ENCODE measurements at regions of chr6 and their contacts with region 1.

Region 1: GRCh38 chr6:131488780-131489179 is 84.2 kb upstream of the ARG1 start:
- DNase-seq: no peak
- H3K4me3 ChIP-seq: no peak overlapping the region
- H3K27ac ChIP-seq: no peak overlapping the region
- H3K4me1 ChIP-seq: peaks cover 0 to 3% (median 0%) of the 10 kb centered on the region in 4 experiments; a peak in 1 of 7 replicates
- H3K27me3 ChIP-seq: no peaks in the 10 kb centered on the region
- CTCF ChIP-seq: no peak
- EP300 ChIP-seq: no peak
- POLR2A ChIP-seq: no peak
- RAD21 ChIP-seq: no peak

Region 2: GRCh38 chr6:131387562-131388447 is 101.0 kb before region 1 on chr6:
- CTCF ChIA-PET with region 1: no interaction called
- POLR2A ChIA-PET with region 1: no interaction called
- DNase-seq: no peak
- H3K4me3 ChIP-seq: no peak overlapping the region
- H3K27ac ChIP-seq: no peak overlapping the region
- H3K4me1 ChIP-seq: peaks cover 0 to 3% (median 0%) of the 10 kb centered on the region in 4 experiments; a peak in 2 of 7 replicates
- H3K27me3 ChIP-seq: no peaks in the 10 kb centered on the region; a peak in 2 of 7 replicates
- CTCF ChIP-seq: no peak
- EP300 ChIP-seq: no peak
- POLR2A ChIP-seq: no peak
- RAD21 ChIP-seq: peak in 1 of 2 experiments; percentile 3; a peak in 1 of 4 replicates

Region 3: DNA sequence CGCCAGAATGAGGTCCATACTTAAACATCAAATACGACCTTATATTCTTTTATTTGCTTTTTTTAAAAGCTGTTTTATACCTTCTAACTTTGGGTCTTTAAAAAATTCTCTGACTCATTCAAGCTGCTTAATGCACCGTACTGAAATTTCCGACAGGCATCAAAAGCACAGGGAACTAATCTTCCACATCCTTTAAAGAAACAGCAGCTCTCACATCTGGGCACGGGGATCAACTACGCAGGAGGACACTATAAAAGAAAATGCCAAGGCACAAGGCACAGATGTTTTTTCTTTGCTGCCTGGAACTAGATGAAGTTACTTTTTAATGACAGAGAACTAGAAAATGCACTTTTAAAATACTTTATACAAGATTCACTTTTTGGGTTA is 28.2 kb before region 1 on chr6:
- CTCF ChIA-PET with region 1: interaction called, 10 read pairs
- POLR2A ChIA-PET with region 1: no interaction called
- DNase-seq: no peak
- H3K4me3 ChIP-seq: no peak overlapping the region
- H3K27ac ChIP-seq: no peak overlapping the region
- H3K4me1 ChIP-seq: peaks cover 0 to 7% (median 0%) of the 10 kb centered on the region in 4 experiments; a peak in 1 of 7 replicates
- H3K27me3 ChIP-seq: no peaks in the 10 kb centered on the region
- CTCF ChIP-seq: no peak
- EP300 ChIP-seq: no peak
- POLR2A ChIP-seq: no peak
- RAD21 ChIP-seq: no peak

Region 4: DNA sequence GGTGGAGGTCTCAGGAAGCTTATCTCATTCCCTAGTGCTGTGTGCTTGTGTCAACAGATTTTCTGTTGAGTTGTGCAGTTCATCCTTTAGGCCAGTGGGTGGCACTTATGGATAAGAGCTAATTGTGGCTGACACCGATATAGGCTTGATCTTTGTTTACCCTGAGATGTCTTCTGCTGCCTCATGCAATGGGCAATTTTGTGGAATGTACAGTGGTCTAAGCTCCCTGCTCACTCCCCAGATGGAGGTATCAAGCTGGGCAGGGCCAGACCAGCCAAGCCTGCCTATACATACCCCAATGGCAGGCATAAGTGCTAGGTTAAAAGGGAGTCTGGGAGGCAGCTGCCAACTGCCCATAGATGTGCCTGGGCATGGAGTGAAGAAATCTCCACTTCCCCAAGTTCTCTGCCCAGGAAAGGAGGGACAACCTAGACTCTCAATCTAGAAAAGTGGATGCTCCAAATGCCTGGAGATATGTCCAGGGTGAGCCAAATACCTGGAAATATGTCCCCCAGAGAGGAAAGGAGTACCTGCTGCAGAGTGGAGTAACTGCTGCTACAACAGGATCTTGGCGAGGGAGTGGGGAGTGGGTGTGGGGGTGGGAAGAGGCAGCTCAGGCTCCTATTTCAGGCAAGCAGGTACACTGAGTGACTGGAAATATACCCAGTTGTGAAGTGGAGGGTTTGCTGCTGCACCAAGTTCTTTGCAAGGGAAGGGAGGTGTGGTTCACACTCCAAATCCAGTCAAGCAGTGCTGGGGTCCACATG is 31.1 kb after region 1 on chr6:
- CTCF ChIA-PET with region 1: interaction called, 31 read pairs
- POLR2A ChIA-PET with region 1: no interaction called
- DNase-seq: peak in 1 of 2 experiments; percentile 62
- H3K4me3 ChIP-seq: no peak overlapping the region
- H3K27ac ChIP-seq: no peak overlapping the region
- H3K4me1 ChIP-seq: no peaks in the 10 kb centered on the region
- H3K27me3 ChIP-seq: no peaks in the 10 kb centered on the region
- CTCF ChIP-seq: peak in 2 of 3 experiments; percentile 54 to 81; a peak in 3 of 4 replicates
- EP300 ChIP-seq: no peak
- POLR2A ChIP-seq: no peak
- RAD21 ChIP-seq: peak; percentile 64 to 77

Measured in H1 (cell line).